ENCODE measurements at regions of chr10 and their contacts with region 1.

Region 1: DNA sequence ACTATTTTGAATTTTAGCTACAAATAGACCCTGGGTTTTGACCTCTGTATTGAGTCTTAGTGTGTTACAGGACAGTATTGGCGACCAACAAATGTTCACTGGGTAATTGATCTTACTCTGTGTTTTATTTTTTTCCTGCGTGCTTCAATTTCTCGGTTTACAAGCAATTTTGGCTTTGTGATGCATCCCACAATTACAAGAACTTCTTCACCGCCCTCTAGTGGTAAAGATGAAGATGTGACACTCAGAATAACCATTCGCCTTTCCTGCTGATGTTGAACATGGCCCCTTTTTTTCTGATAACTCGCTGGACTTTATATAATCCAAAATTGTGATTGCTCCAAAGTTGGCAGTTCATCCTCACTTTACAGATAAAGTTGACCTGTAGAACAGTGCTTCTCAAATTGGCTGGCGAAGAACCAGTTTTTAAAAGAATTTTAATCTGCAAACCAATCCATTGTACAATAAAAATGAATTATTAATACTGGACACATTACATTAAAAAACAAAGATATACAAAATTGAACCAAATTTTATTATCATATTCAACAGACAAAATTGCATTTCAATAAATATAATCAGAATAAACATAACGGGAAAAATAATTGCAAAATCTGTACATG is 20.2 kb upstream of the SMC3 start:
- DNase-seq: no peak
- ATAC-seq: peak; percentile 67 to 90 (median 83)
- H3K4me3 ChIP-seq: no peak overlapping the region
- H3K27ac ChIP-seq: no peak overlapping the region
- H3K4me1 ChIP-seq: no peaks in the 10 kb centered on the region
- H3K27me3 ChIP-seq: no peaks in the 10 kb centered on the region
- CTCF ChIP-seq: peak; percentile 49 to 72 (median 66)

Region 2: DNA sequence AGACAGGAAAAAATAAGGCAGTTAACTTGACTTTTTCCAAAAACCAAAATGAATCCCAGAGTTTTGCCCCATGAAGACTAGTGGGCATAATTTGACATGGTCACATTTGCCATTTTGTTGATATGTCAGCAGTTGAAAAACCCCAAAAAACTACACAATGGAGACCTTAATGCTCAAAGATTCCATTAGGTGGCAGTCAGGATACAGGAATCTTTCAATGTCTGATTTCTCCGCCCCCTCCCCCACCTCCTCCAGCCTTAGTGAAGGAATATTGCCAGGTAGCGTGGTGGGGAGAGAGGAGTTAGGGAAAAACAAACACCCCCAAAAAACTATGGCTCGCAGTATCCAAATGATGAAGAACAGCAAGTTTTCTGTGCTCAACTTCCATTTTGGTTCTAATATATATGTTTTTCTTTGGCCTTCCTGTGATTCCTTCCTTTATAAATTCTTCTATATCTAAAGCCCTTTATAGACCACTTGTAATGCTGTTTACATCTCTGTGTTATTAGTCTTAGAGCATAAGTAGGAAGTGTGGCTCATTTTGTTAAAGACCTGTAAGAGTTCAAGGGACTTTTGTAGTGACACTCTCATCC is 235.8 kb before region 1 on chr10:
- intact Hi-C with region 1: loop called in 2 of 3 experiments (anchors 5 kb)
- DNase-seq: peak in 3 of 6 donors; percentile 32 to 52 (median 36)
- ATAC-seq: peak; percentile 77 to 95 (median 90)
- H3K4me3 ChIP-seq: no peak overlapping the region
- H3K27ac ChIP-seq: no peak overlapping the region
- H3K4me1 ChIP-seq: no peaks in the 10 kb centered on the region
- H3K27me3 ChIP-seq: peaks cover 0 to 8% (median 0%) of the 10 kb centered on the region in 4 donors
- CTCF ChIP-seq: peak in 3 of 4 donors; percentile 28 to 44 (median 42)

Region 3: GRCh38 chr10:110354322-110354766 is 192.9 kb before region 1 on chr10:
- intact Hi-C with region 1: loop called in 1 of 3 experiments (anchors 10 kb)
- DNase-seq: peak in 5 of 6 donors; percentile 47 to 86 (median 67)
- ATAC-seq: peak; percentile 73 to 85 (median 78)
- H3K4me3 ChIP-seq: no peak overlapping the region
- H3K27ac ChIP-seq: no peak overlapping the region
- H3K4me1 ChIP-seq: no peaks in the 10 kb centered on the region
- H3K27me3 ChIP-seq: peaks cover 0 to 3% (median 0%) of the 10 kb centered on the region in 4 donors
- CTCF ChIP-seq: peak; percentile 50 to 59 (median 54)

Region 4: DNA sequence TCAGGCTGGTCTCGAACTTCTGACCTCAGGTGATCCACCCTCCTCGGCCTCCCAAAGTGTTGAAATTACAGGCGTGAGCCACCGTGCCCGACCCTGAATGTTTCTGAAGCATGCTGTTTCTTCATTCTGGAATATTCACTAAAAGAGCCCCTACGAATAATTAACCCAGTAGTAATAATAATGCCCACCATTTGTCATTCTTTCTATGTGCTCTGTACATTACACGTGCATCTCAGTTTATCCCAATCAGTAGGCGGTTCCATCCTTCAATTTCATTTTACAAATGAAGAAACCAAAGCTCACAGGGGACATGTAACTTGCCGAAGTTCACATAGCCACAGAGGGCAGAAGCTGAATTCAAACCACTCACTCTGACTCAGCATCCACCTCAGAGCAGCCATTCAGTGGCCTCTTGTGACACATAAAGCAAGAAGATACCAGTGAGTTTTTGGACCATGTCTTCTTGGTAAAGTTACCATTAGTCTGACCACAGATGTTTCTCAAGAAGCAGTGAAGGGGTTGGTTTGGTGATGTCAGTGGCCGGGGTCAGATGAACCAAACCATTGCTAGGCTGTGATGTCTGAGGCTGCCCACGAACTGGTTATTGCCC is 121.5 kb before region 1 on chr10:
- intact Hi-C with region 1: no loop called
- DNase-seq: no peak
- ATAC-seq: peak in 3 of 4 donors; percentile 33 to 52 (median 48)
- H3K4me3 ChIP-seq: no peak overlapping the region
- H3K27ac ChIP-seq: peak overlapping the region in 1 of 4 donors; percentile 27
- H3K4me1 ChIP-seq: peaks cover 0 to 5% (median 0%) of the 10 kb centered on the region in 3 donors
- H3K27me3 ChIP-seq: no peaks in the 10 kb centered on the region
- CTCF ChIP-seq: no peak